Gastrocnemius medialis (tissue), 4 donors: ENCODE measurements at regions of chr16 and their contacts with region 1.

Region 1: GRCh38 chr16:4395055-4395726 is 21.2 kb downstream of the CORO7 start:
- DNase-seq: no peak
- ATAC-seq: no peak
- H3K4me3 ChIP-seq: no peak overlapping the region
- H3K27ac ChIP-seq: no peak overlapping the region
- H3K4me1 ChIP-seq: peaks cover 0 to 3% of the 10 kb centered on the region in 2 donors
- H3K27me3 ChIP-seq: no peaks in the 10 kb centered on the region
- CTCF ChIP-seq: no peak
- POLR2A ChIP-seq: no peak

Region 2: DNA sequence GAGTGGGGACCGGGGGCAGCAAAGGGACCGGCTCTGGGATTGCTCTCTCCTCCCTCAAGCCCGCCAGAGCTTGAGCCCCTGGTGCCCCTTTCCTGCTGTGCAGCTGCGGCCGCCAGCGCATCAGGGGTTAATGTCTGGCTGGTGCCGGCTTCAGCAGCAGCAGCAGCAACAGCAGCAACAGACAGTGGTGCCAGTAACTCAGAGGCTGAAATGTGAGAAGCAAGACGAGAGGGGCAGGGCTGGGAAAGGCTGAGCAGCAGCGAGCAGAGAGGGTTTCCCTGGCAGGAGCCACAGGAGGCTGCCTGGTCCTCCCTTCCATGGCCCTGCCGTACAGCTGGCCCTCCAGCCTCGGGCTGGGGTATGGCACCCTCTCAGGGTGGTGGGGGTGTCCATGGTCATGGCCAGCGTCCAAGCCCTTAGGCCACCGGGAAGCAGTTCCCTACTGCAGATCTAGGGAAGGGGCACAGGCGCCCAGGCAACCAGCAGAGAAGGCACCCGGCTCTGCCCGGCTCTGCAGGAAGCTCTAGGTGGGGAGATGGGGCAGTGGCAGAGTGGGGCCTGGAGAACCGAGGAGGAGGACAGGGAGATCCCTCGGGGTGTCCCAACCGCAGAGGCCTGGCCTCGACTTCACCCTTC is 101.3 kb before region 1 on chr16:
- in situ Hi-C with region 1: loop called in 1 of 4 experiments (anchors 5 kb)
- intact Hi-C with region 1: no loop called
- DNase-seq: peak; percentile 66 to 80
- ATAC-seq: peak; percentile 88 to 89
- H3K4me3 ChIP-seq: peak overlapping the region in 3 of 4 donors; percentile 4 to 13 (median 5)
- H3K27ac ChIP-seq: peak overlapping the region; percentile 66 to 79 (median 71)
- H3K4me1 ChIP-seq: peaks cover 38 to 54% of the 10 kb centered on the region in 2 donors
- H3K27me3 ChIP-seq: no peaks in the 10 kb centered on the region
- CTCF ChIP-seq: no peak
- POLR2A ChIP-seq: no peak

Region 3: DNA sequence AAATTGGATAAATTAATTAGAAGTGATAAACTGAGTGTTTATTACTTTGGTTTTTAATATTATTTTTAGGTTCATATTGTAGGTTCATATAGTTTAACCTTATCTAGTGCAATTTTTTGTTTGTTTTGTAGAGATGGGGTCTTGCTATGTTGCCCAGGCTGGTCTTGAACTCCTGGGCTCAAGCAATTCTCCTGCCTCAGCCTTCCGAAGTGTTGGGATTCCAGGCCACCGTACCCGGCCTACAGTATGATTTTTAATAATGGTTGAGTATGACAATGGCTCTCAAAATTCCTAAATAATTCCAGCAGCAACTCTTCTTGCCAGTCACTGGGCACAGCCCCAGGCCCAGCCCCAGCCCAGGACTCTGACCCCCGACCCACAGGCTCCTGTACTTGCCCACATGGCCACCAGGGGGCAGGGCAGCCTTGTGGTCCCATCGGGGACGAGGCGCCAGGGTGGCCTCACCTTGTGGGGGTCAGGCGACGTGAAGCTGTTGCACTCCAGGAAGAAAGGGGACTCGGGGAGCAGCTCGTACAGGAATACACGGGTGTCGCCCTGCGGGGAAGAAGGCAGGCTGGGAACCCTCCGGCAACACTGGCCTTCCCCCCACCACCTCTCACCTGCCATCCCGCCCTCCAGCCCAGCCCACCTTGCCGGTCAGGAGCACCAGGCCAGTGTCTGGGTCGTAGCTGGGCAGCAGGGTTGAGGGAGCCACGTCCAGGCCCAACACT is 36.2 kb before region 1 on chr16:
- in situ Hi-C with region 1: loop called in 2 of 4 experiments (anchors 5 kb)
- intact Hi-C with region 1: no loop called
- DNase-seq: peak in 1 of 2 donors; percentile 46
- ATAC-seq: peak in 1 of 2 donors; percentile 72
- H3K4me3 ChIP-seq: no peak overlapping the region
- H3K27ac ChIP-seq: no peak overlapping the region
- H3K4me1 ChIP-seq: no peaks in the 10 kb centered on the region
- H3K27me3 ChIP-seq: no peaks in the 10 kb centered on the region
- CTCF ChIP-seq: peak; percentile 94 to 99 (median 97)
- POLR2A ChIP-seq: no peak